Lower lobe of right lung (tissue), 2 donors: ENCODE measurements at regions of chr7 and their contacts with region 1.

Region 1: GRCh38 chr7:13262929-13263530 is 575.6 kb downstream of the ARL4A start:
- DNase-seq: no peak
- ATAC-seq: peak in 1 of 2 donors; percentile 71
- H3K4me3 ChIP-seq: no peak overlapping the region
- H3K27ac ChIP-seq: no peak overlapping the region
- H3K4me1 ChIP-seq: no peaks in the 10 kb centered on the region
- H3K27me3 ChIP-seq: no peaks in the 10 kb centered on the region
- CTCF ChIP-seq: peak; percentile 52

Region 2: GRCh38 chr7:12524794-12525386 is 738.1 kb before region 1 on chr7:
- intact Hi-C with region 1: loop called (anchors 10 kb)
- DNase-seq: no peak
- ATAC-seq: no peak
- H3K4me3 ChIP-seq: no peak overlapping the region
- H3K27ac ChIP-seq: no peak overlapping the region
- H3K4me1 ChIP-seq: no peaks in the 10 kb centered on the region
- H3K27me3 ChIP-seq: no peaks in the 10 kb centered on the region
- CTCF ChIP-seq: peak; percentile 67

Region 3: GRCh38 chr7:12638851-12639467 is 624.1 kb before region 1 on chr7:
- intact Hi-C with region 1: loop called (anchors 10 kb)
- DNase-seq: no peak
- ATAC-seq: peak; percentile 50 to 54
- H3K4me3 ChIP-seq: no peak overlapping the region
- H3K27ac ChIP-seq: no peak overlapping the region
- H3K4me1 ChIP-seq: peaks cover 5% of the 10 kb centered on the region
- H3K27me3 ChIP-seq: no peaks in the 10 kb centered on the region
- CTCF ChIP-seq: peak; percentile 62

Region 4: GRCh38 chr7:12686894-12687717 is 575.9 kb before region 1 on chr7 and contains the start of gene ARL4A:
- intact Hi-C with region 1: loop called (anchors 10 kb)
- DNase-seq: peak; percentile 99
- ATAC-seq: peak; percentile 95 to 96
- H3K4me3 ChIP-seq: peak within 1 kb of the TSS; percentile 96
- H3K27ac ChIP-seq: peak within 1 kb of the TSS; percentile 97
- H3K4me1 ChIP-seq: peaks cover 3% of the 10 kb centered on the region
- H3K27me3 ChIP-seq: no peaks in the 10 kb centered on the region
- CTCF ChIP-seq: peak; percentile 37
- total RNA-seq, gene ARL4A: 44.8 TPM

Region 5: GRCh38 chr7:14009453-14010418 is 746.7 kb after region 1 on chr7:
- intact Hi-C with region 1: no loop called
- DNase-seq: no peak
- ATAC-seq: no peak
- H3K4me3 ChIP-seq: no peak overlapping the region
- H3K27ac ChIP-seq: no peak overlapping the region
- H3K4me1 ChIP-seq: no peaks in the 10 kb centered on the region
- H3K27me3 ChIP-seq: no peaks in the 10 kb centered on the region
- CTCF ChIP-seq: no peak

Region 6: DNA sequence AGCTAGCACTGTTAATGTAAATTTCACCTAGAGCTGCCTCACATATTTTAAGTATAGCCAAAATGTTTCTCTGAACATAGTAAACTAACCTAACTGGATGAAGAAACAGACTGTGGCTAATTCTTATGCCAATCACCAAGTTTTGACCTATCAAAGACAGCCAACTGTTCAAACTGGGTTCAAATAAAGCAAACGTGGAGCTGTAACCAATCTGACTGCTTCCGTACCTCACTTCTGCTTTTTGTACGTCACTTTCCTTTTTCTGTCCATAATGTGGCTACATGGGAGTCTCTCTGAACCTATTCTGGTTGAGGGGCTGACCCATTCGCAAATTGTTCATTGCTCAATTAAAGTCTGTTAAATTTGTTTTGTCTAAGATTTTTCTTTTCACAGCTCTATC is 792.8 kb after region 1 on chr7:
- intact Hi-C with region 1: no loop called
- DNase-seq: no peak
- ATAC-seq: no peak
- H3K4me3 ChIP-seq: no peak overlapping the region
- H3K27ac ChIP-seq: no peak overlapping the region
- H3K4me1 ChIP-seq: no peaks in the 10 kb centered on the region
- H3K27me3 ChIP-seq: no peaks in the 10 kb centered on the region
- CTCF ChIP-seq: no peak